Endothelial cell of umbilical vein (primary cell): ENCODE measurements at regions of chr1 and their contacts with region 1.

Region 1: GRCh38 chr1:231584124-231584523 is 42.5 kb upstream of the DISC1 start:
- DNase-seq: peak; percentile 88
- H3K4me3 ChIP-seq: no peak overlapping the region
- H3K27ac ChIP-seq: peak overlapping the region; percentile 47
- H3K4me1 ChIP-seq: peaks cover 8% of the 10 kb centered on the region
- H3K27me3 ChIP-seq: no peaks in the 10 kb centered on the region
- CTCF ChIP-seq: peak in 1 of 2 donors; percentile 20
- POLR2A ChIP-seq: no peak

Region 2: DNA sequence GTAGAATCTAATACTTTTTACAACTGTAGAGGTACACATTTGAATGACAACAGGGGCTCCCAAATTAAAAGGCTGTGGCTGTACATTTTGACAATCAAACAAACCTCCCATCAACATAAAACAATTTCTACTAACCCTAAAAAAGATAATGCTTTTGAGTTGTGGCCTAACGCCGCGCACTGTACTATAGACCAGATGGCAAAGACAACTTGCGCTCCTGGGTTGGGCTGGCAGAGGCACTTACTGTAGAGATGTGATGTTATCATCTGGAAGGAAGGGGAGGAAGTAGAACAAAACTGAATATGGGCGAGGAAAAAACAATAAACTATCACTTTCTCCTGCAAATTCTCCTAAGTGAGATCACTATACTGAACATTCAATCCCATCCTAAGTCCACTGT is 219.9 kb before region 1 on chr1:
- CTCF ChIA-PET with region 1: interaction called, 47 read pairs
- POLR2A ChIA-PET with region 1: no interaction called
- dilution Hi-C with region 1: no loop called
- intact Hi-C with region 1: no loop called
- DNase-seq: no peak
- H3K4me3 ChIP-seq: no peak overlapping the region
- H3K27ac ChIP-seq: no peak overlapping the region
- H3K4me1 ChIP-seq: no peaks in the 10 kb centered on the region
- H3K27me3 ChIP-seq: no peaks in the 10 kb centered on the region
- CTCF ChIP-seq: no peak
- POLR2A ChIP-seq: no peak

Region 3: GRCh38 chr1:231571904-231572303 is 12.2 kb before region 1 on chr1:
- CTCF ChIA-PET with region 1: interaction called, 9 read pairs
- POLR2A ChIA-PET with region 1: interaction called, 3 read pairs
- dilution Hi-C with region 1: no loop called
- intact Hi-C with region 1: loop called (anchors 1 kb)
- DNase-seq: peak; percentile 94
- H3K4me3 ChIP-seq: peak overlapping the region in 1 of 3 experiments; percentile 1
- H3K27ac ChIP-seq: peak overlapping the region; percentile 22
- H3K4me1 ChIP-seq: peaks cover 12% of the 10 kb centered on the region
- H3K27me3 ChIP-seq: no peaks in the 10 kb centered on the region
- CTCF ChIP-seq: no peak
- POLR2A ChIP-seq: no peak